Esophagus muscularis mucosa (tissue), 4 donors: ENCODE measurements at regions of chr11 and their contacts with region 1.

Region 1: GRCh38 chr11:129992161-129992944 is 10.3 kb downstream of the PRDM10 start:
- DNase-seq: no peak
- H3K4me3 ChIP-seq: no peak overlapping the region
- H3K27ac ChIP-seq: no peak overlapping the region
- H3K4me1 ChIP-seq: peaks cover 16 to 41% (median 35%) of the 10 kb centered on the region in 4 donors
- H3K27me3 ChIP-seq: no peaks in the 10 kb centered on the region
- CTCF ChIP-seq: no peak
- EP300 ChIP-seq: no peak
- POLR2A ChIP-seq: no peak

Region 2: GRCh38 chr11:130131961-130132850 is 139.9 kb after region 1 on chr11:
- intact Hi-C with region 1: loop called (anchors 5 kb)
- DNase-seq: no peak
- H3K4me3 ChIP-seq: no peak overlapping the region
- H3K27ac ChIP-seq: no peak overlapping the region
- H3K4me1 ChIP-seq: peaks cover 0 to 17% (median 12%) of the 10 kb centered on the region in 4 donors
- H3K27me3 ChIP-seq: no peaks in the 10 kb centered on the region
- CTCF ChIP-seq: peak; percentile 78 to 87 (median 84)
- EP300 ChIP-seq: no peak
- POLR2A ChIP-seq: no peak